Posterior cingulate gyrus (tissue), 11 donors: ENCODE measurements at regions of chr2 and their contacts with region 1.

Region 1: GRCh38 chr2:71331581-71332434 is at the start of gene ZNF638:
- DNase-seq: peak; percentile 83 to 98 (median 88)

Region 2: DNA sequence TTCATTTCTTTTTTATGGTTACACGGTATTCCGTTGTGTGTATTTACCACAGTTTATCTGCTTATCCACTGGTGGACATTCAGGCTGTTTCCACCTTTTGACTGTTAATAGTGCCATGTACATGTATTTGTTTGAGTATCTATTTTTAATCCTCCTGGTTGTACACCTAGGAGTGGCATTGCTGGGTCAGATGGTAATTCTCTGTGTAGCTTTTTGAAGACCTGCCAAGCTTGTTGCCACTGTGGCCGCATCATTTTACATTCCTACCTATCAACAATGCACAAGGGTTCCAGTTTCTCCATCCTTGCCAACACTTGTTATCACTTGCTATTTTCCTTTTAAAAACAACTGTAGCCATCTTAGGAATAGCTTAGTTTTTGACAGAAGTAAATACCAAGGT is 188.0 kb before region 1 on chr2:
- intact Hi-C with region 1: no loop called
- DNase-seq: no peak

Region 3: DNA sequence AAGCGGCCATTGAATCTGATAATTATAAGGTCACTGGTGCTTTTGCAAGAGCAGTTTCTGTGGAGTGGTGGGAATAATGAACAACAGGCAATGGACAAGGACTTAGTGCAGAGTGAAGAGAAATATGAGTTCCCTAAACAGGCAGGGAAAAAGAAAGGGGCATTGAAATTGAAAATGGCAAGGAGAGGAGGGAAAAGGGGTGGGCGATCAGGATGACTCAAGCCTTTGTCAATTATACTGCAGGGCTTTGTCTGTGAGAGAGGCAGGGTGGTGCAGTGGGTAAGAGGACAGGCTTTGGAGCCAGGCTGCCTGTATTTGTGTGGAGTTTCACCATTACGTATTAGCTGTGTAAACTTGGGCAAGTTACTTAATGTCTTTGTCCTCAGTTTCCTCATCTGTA is 75.4 kb before region 1 on chr2:
- intact Hi-C with region 1: no loop called
- DNase-seq: peak in 8 of 10 donors; percentile 24 to 94 (median 61)

Region 4: GRCh38 chr2:71276311-71277146 is 55.3 kb before region 1 on chr2:
- intact Hi-C with region 1: loop called (anchors 5 kb)
- DNase-seq: peak; percentile 87 to 99 (median 92)

Region 5: DNA sequence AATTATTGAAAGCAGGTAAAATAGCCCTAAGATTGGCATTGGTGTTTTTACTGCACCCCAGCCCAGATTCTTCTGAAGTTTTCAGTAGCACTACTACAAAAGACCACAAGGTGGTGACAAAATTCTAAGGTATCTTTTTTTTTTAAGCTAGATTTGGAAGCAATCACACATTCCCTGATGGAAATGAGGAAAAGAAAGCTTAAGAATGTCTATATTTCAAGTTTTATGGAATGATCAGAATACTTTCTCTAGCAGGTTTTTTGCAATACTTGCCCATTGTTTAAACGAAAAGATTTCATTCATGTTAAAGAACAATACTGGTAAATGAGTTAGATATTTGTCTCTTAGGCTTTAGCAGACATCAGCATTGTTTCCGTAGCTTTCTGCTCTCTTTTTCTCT is 32.3 kb before region 1 on chr2:
- intact Hi-C with region 1: loop called (anchors 5 kb)
- DNase-seq: no peak